Mammary epithelial cell (primary cell): ENCODE measurements at regions of chr12 and their contacts with region 1.

Region 1: GRCh38 chr12:54368709-54369583 is 4.7 kb upstream of the GPR84 start:
- DNase-seq: peak; percentile 65
- H3K4me3 ChIP-seq: no peak overlapping the region
- H3K27ac ChIP-seq: no peak overlapping the region
- H3K4me1 ChIP-seq: peaks cover 32% of the 10 kb centered on the region
- H3K27me3 ChIP-seq: no peaks in the 10 kb centered on the region
- CTCF ChIP-seq: peak; percentile 87 to 89

Region 2: DNA sequence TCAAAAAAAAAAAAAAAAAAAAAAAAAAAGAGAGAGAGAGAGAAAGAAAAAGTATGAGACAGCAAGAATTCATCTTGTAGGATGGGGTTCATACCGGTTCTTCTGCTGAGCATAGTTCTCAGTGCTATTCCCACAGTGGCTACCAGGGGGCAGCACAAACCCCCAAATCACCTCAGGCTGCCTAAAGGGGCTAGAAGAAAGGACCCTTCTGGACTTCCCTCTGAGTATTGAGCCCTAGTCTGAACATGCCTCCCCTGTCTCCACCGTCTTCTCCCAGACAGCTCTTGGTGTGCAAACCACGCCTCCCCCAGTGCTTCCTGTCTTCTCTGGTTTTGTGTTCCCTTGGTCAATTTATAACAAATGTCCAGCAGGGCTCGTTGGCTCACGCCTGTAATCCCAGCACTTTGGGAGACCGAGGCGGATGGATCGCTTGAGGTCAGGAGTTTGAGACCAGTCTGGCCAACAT is 148.8 kb before region 1 on chr12:
- CTCF ChIA-PET with region 1: interaction called, 5 read pairs
- dilution Hi-C with region 1: loop called (anchors 5 kb)
- in situ Hi-C with region 1: loop called (anchors 5 kb)
- intact Hi-C with region 1: no loop called
- DNase-seq: peak; percentile 79
- H3K4me3 ChIP-seq: no peak overlapping the region
- H3K27ac ChIP-seq: no peak overlapping the region
- H3K4me1 ChIP-seq: peaks cover 44% of the 10 kb centered on the region
- H3K27me3 ChIP-seq: no peaks in the 10 kb centered on the region
- CTCF ChIP-seq: peak; percentile 79 to 86

Region 3: GRCh38 chr12:54294152-54294952 is 74.6 kb before region 1 on chr12:
- CTCF ChIA-PET with region 1: no interaction called
- dilution Hi-C with region 1: loop called (anchors 5 kb)
- in situ Hi-C with region 1: loop called in 1 of 2 experiments (anchors 5 kb)
- intact Hi-C with region 1: loop called (anchors 2 kb)
- DNase-seq: no peak
- H3K4me3 ChIP-seq: no peak overlapping the region
- H3K27ac ChIP-seq: no peak overlapping the region
- H3K4me1 ChIP-seq: peaks cover under 1% of the 10 kb centered on the region
- H3K27me3 ChIP-seq: no peaks in the 10 kb centered on the region
- CTCF ChIP-seq: peak; percentile 96

Region 4: GRCh38 chr12:54379401-54380201 is 10.7 kb after region 1 on chr12:
- CTCF ChIA-PET with region 1: interaction called, 10 read pairs
- dilution Hi-C with region 1: no loop called
- in situ Hi-C with region 1: no loop called
- intact Hi-C with region 1: loop called (anchors 1 kb)
- DNase-seq: peak; percentile 67
- H3K4me3 ChIP-seq: no peak overlapping the region
- H3K27ac ChIP-seq: no peak overlapping the region
- H3K4me1 ChIP-seq: peaks cover 39% of the 10 kb centered on the region
- H3K27me3 ChIP-seq: no peaks in the 10 kb centered on the region
- CTCF ChIP-seq: peak; percentile 100

Region 5: GRCh38 chr12:54398995-54399793 is 30.2 kb after region 1 on chr12:
- CTCF ChIA-PET with region 1: no interaction called
- dilution Hi-C with region 1: no loop called
- in situ Hi-C with region 1: no loop called
- intact Hi-C with region 1: loop called (anchors 1 kb)
- DNase-seq: peak; percentile 72
- H3K4me3 ChIP-seq: no peak overlapping the region
- H3K27ac ChIP-seq: no peak overlapping the region
- H3K4me1 ChIP-seq: peaks cover 6% of the 10 kb centered on the region
- H3K27me3 ChIP-seq: no peaks in the 10 kb centered on the region
- CTCF ChIP-seq: peak; percentile 100

Region 6: GRCh38 chr12:54439521-54440255 is 70.7 kb after region 1 on chr12:
- CTCF ChIA-PET with region 1: no interaction called
- dilution Hi-C with region 1: no loop called
- in situ Hi-C with region 1: no loop called
- intact Hi-C with region 1: loop called (anchors 1 kb)
- DNase-seq: peak; percentile 59
- H3K4me3 ChIP-seq: no peak overlapping the region
- H3K27ac ChIP-seq: no peak overlapping the region
- H3K4me1 ChIP-seq: peaks cover 17% of the 10 kb centered on the region
- H3K27me3 ChIP-seq: no peaks in the 10 kb centered on the region
- CTCF ChIP-seq: peak; percentile 78 to 83